MCF 10A (cell line): ENCODE measurements at regions of chr21 and their contacts with region 1.

Region 1: DNA sequence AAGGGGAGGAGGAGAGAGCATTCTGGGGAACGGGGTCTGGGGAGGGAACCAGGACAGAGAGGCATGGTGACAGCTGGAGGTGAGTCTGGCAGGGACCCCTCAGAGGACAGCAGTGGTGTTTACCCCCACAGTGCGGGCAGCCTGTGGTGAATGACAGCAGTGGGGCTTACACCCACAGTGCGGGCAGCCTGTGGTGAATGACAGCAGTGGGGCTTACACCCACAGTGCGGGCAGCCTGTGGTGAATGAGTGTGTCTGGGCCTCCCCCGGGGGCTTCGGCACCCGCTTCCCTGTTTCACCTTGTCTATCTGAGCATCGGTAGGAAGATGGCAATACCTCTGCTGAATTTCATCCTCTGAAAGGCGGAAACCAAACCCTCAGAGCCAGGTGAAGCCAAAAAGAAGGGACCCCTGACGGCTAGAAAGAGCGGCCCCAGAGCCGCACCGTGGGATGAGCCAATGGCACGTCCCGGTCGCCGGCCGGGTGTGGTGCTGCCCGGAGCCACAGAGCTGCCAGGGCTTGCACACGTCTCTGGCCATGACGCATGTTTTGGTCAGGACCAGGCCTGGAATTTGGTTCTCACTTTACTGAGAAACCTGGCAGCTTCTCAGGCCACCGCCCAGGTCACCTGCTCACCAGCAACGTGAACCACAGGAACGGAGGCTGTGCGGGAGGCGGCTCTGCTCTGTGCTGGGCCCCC is 54.1 kb downstream of the SIK1 start:
- DNase-seq: peak; percentile 90
- H3K4me3 Mint-ChIP-seq: peak overlapping the region; percentile 12
- H3K27ac Mint-ChIP-seq: peak overlapping the region; percentile 77
- H3K4me1 Mint-ChIP-seq: peaks cover 18% of the 10 kb centered on the region
- H3K27me3 Mint-ChIP-seq: no peaks in the 10 kb centered on the region
- CTCF ChIP-seq: no peak

Region 2: DNA sequence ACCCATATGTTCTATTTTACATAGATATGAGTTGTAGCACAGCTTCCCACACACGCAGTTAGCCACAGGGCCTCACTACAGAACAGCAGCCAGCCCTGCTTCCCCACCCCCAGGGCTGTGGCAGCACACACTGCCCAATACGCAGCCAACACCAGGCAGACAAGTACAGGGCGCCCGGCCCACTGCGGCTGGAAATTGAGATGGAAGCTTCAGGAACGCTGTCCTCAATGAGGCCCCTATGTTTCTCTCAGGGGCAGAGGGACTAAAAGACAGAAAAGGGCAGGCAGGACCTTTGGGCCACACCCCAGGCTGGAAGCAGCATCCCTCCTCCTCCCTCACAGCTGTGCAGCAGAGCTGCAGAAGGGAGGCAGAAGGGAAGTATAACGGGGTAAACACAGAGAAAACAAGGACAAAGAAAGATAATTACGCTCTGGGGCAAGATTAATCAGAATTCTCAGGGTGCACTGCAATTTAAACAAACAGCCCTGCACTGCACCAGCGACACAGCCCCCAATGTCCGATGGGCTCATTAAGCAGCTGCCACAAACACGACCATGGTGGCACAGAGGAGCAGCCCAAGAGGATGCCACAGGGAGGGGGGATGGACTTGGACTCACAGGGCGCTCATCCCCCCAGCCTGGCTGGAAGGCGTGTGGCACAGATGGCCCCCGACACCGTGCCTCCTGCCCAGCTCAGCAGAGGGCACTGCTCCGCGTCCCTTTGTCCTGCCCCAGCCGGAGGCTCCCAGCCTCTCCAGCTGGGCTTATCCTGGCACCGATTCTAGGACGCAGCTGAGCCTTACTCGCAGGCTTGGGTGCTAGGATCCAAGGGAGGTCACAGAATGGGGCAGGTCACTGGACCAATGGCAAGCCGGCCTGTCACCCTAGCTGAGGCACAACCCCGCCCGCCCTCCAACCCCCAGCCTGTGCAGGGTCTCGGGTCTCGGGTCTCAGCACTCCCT is 507.7 kb before region 1 on chr21:
- CTCF ChIA-PET with region 1: no interaction called
- POLR2A ChIA-PET with region 1: no interaction called
- intact Hi-C with region 1: no loop called
- DNase-seq: no peak
- H3K4me3 Mint-ChIP-seq: no peak overlapping the region
- H3K27ac Mint-ChIP-seq: peak overlapping the region; percentile 61
- H3K4me1 Mint-ChIP-seq: peaks cover 8% of the 10 kb centered on the region
- H3K27me3 Mint-ChIP-seq: no peaks in the 10 kb centered on the region
- CTCF ChIP-seq: no peak

Region 3: DNA sequence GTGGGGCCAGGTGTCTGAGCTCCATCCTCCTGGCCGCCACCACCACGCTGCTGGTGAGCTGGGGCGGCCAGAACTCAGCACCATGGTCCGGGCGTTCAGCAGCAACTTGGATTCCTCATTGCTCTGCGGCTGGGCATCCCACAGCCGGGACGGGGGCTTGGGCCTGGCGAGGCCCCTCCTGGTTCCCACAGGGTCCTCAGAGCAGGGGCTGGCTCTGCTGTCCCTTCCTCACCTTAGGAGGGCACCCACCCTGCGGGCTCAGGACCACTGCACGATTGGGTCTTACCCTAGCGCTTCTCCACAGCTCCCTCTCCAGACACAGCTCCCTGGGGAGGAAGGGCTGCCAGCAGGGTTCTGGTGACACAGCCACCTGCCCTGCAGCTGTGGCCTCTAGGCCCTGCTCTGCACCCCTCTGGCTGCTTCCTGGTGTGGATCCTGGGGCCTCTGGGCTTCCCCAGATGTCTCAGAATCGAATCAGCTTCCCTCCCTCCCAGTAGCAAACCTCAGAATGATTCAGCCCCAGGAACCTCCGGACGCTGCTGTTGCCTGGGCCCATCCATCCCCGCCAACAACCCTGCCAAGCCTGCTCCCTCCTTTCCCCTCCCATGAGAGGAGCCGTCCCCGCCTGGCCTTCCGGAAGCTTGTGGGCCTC is 179.0 kb before region 1 on chr21:
- CTCF ChIA-PET with region 1: interaction called, 4 read pairs
- POLR2A ChIA-PET with region 1: interaction called, 18 read pairs
- intact Hi-C with region 1: no loop called
- DNase-seq: peak; percentile 81
- H3K4me3 Mint-ChIP-seq: peak overlapping the region; percentile 44
- H3K27ac Mint-ChIP-seq: peak overlapping the region; percentile 93
- H3K4me1 Mint-ChIP-seq: peaks cover 64% of the 10 kb centered on the region
- H3K27me3 Mint-ChIP-seq: no peaks in the 10 kb centered on the region
- CTCF ChIP-seq: no peak

Region 4: GRCh38 chr21:43312751-43313169 is 60.1 kb before region 1 on chr21:
- CTCF ChIA-PET with region 1: no interaction called
- POLR2A ChIA-PET with region 1: interaction called, 11 read pairs
- intact Hi-C with region 1: no loop called
- DNase-seq: no peak
- H3K4me3 Mint-ChIP-seq: no peak overlapping the region
- H3K27ac Mint-ChIP-seq: no peak overlapping the region
- H3K4me1 Mint-ChIP-seq: peaks cover 28% of the 10 kb centered on the region
- H3K27me3 Mint-ChIP-seq: no peaks in the 10 kb centered on the region
- CTCF ChIP-seq: no peak

Region 5: GRCh38 chr21:43362321-43362791 is 10.5 kb before region 1 on chr21:
- CTCF ChIA-PET with region 1: interaction called, 4 read pairs
- POLR2A ChIA-PET with region 1: interaction called, 11 read pairs
- intact Hi-C with region 1: no loop called
- DNase-seq: no peak
- H3K4me3 Mint-ChIP-seq: no peak overlapping the region
- H3K27ac Mint-ChIP-seq: no peak overlapping the region
- H3K4me1 Mint-ChIP-seq: peaks cover 12% of the 10 kb centered on the region
- H3K27me3 Mint-ChIP-seq: no peaks in the 10 kb centered on the region
- CTCF ChIP-seq: no peak

Region 6: DNA sequence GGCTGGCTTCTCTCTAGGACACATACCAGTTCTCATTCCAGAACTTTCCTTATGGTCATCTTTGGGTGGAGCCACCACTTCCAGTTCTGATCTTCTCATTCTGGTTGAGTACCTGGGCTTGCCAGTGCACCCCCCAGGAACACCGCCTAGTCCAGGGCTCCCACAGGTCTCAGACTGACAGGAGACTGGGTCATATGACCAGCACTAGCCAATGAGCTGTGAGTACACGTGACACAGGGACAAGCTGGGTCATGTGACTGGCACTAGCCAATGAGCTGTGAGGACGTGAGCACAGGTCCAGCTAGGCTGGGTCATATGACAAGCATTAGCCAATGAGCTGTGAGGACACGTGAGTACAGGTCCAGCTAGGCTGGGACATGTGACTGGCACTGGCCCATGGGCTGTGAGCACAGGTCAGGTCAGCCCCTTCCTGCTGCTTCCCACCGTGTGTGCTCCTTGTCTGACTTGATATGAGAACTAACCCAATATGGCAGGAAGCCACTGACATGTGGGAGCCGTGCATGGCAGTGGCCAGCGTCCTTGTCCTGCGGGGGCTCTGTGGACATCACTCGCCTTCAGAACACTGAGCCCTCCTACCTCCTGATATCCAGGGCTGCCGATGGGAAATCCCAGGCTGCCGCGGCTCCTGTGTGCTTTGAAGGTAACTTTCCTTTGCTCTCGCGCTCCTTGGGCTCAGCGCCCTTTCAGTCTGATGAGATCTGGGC is 1144.5 kb after region 1 on chr21:
- CTCF ChIA-PET with region 1: no interaction called
- POLR2A ChIA-PET with region 1: no interaction called
- intact Hi-C with region 1: no loop called
- DNase-seq: no peak
- H3K4me3 Mint-ChIP-seq: no peak overlapping the region
- H3K27ac Mint-ChIP-seq: no peak overlapping the region
- H3K4me1 Mint-ChIP-seq: no peaks in the 10 kb centered on the region
- H3K27me3 Mint-ChIP-seq: peaks cover 16% of the 10 kb centered on the region
- CTCF ChIP-seq: no peak